Posterior cingulate gyrus (tissue), 11 donors: ENCODE measurements at regions of chr10 and their contacts with region 1.

Region 1: DNA sequence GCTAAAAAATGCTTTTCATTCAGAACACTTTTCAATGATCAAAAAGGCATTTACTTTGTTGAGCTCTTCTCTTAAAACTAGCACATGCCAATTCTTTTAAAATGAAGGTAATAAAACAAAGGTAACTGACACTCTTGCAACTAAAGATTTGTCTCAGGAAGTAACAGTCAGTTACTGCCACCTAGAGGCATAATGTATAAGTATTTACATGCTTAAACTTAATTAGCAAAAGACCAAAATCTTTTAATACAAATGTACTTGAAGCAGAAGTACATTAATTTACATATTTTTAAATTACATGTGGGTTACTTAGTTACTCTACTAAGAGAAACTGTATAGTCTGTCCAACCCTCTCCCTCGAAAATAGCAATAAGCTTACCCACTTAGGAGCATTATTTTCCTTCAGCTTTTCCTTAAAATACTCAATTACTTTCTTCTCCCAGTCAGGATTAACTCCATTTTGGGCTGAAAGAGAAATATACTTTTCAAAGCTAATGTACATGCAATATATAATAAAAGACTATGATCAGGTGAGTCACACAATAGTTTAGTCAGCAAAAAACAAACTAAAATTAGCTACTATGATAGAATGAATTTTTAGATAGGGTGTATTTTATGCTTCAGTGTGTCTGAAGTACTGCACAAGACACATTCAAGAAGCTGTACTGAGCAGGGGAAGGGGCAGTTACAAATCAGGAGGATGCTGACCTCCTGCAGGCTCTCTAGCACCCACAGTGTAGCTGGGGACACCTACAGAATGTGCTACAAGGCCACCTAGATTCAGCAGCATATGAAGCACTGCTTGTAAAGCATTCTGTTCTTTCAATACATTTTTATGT is 13.0 kb downstream of the MCMBP start:
- DNase-seq: no peak

Region 2: DNA sequence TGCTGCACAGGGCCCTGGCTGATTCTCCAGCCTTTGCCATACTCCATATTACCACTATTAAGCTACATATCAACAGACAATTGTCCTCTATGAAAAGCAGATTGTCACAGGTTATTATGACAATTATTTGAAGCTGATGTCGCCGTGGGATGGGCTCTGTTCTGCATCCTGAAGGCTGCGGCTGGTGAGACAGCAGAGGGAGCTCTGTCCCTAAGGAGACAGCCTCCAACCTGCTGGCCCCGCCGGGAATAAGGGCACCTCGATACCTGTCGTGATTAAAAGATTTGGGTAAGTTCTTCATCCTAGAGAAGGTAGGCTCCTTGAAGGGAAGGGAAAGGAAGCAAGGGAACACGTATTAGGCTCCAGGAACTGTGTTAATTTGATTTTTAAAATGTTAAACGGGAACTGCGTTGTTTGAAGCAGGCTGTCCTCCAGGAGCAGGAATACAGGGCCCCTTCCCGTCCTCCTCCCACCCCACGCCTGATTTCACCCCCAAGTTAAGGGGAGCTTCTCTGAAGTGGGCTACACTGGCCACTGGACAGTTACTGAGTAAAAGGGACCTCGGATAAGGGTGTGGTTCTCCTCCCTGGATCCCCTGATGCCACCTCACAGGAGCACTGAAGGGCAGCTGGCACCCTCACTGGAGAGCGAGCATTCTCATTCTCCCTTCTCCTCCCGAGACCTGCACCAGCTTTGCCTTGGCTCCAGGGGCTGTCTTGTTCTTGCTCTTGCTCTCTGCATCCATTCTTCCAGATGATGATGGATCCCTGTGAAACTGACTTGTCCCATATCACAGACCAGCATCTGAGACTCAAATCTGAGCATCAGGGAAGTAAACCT is 251.1 kb before region 1 on chr10:
- intact Hi-C with region 1: loop called (anchors 5 kb)
- DNase-seq: peak; percentile 27 to 95 (median 64)

Region 3: GRCh38 chr10:119686439-119687191 is 173.0 kb before region 1 on chr10:
- intact Hi-C with region 1: loop called (anchors 1 kb)
- DNase-seq: peak; percentile 54 to 97 (median 82)

Region 4: DNA sequence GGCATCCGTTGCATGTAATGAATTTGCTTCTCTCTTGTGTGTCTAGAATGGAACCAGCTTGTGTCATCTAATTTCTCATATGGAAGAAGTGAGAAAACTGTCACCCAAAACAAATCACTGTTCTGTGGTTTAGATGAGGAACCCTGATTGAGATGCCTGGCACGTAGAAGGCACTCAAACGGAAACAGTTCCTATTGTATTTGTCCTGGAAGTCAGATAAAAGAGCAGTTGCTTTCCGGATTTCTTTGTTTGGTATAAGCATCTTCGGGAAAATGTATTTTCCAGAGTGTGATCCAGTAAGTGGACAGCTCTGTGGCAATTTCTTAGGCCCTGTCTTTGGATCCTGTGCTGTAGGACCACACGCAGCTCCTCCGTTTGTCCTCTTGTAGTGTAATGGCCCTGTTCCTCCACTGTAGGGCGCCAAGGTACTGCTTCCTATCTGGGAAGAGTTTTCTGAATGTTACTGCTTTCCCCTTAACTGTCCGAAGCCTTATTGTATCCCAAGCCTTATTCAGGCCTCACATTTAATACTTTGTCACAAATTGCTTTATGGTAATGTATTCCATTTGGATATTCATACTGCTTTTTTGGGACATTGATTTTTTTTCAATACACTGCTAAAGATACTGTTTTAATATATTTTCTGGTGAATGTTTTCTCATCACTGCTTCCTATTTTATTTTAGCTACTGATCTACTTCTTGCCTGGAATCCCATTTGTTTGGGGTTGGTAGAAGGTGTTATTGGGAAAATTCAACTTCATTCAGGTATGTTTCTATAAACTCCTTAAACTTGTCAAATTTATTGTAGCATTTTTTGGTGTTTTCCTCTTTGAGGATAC is 109.0 kb before region 1 on chr10:
- intact Hi-C with region 1: loop called (anchors 2 kb)
- DNase-seq: peak in 8 of 10 donors; percentile 42 to 95 (median 78)